Endothelial cell of umbilical vein (primary cell): ENCODE measurements at regions of chr3 and their contacts with region 1.

Region 1: GRCh38 chr3:119498186-119498987 is at the start of gene TIMMDC1:
- DNase-seq: peak; percentile 97
- H3K4me3 ChIP-seq: peak within 1 kb of the TSS; percentile 82 to 85 (median 83)
- H3K27ac ChIP-seq: peak within 1 kb of the TSS; percentile 80
- H3K4me1 ChIP-seq: peaks cover 26% of the 10 kb centered on the region
- H3K27me3 ChIP-seq: no peaks in the 10 kb centered on the region
- CTCF ChIP-seq: no peak
- POLR2A ChIP-seq: peak; percentile 86
- total RNA-seq, gene TIMMDC1: 76.2 and 80.8 TPM in 2 replicates

Region 2: GRCh38 chr3:119463171-119464169 is 34.9 kb before region 1 on chr3 and contains the start of gene TMEM39A:
- CTCF ChIA-PET with region 1: interaction called, 5 read pairs
- POLR2A ChIA-PET with region 1: interaction called, 11 read pairs
- dilution Hi-C with region 1: no loop called
- intact Hi-C with region 1: loop called (anchors 1 kb)
- DNase-seq: peak; percentile 98
- H3K4me3 ChIP-seq: peak within 1 kb of the TSS; percentile 92 to 98 (median 98)
- H3K27ac ChIP-seq: peak within 1 kb of the TSS; percentile 67
- H3K4me1 ChIP-seq: peaks cover 18% of the 10 kb centered on the region
- H3K27me3 ChIP-seq: no peaks in the 10 kb centered on the region
- CTCF ChIP-seq: no peak
- POLR2A ChIP-seq: peak; percentile 98
- total RNA-seq, gene TMEM39A: 53.0 and 56.0 TPM in 2 replicates

Region 3: DNA sequence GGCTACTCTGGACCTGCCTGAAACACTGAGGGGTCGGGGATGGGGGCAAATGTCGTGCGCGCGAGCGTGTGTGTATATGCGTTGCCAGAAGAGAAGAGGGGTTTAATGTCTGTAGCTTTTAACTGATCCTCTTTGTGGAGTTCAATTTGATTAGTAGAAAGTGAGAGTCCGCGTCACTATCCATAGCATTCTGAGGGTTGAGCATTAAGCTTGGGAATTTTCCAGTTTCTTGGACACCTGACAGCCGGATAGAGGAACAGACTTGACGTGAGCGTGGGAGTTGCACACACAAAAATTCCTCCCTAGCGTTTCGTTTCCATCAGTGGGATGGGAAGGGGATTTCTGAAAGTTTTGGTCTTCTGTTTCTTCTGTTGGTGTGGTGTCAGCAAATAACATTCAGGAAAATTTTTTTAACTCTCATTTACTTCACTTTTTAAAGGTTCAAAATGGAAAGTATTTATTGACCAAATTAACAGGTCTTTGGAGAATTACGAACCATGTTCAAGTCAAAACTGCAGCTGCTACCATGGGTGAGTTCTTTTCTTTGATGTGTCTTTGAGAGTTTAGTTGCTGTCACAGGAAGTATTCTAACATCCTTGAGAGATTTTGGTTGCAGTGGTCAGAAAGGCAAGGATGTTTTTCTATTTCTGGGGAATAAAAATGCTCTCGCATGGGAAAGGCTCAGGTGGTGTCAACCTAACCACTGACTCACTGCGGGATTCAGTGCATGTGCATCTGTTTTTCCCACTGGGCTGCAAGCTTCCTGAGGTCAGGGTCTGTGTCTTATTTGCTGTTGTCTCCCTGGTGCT is 28.8 kb before region 1 on chr3:
- CTCF ChIA-PET with region 1: interaction called, 5 read pairs
- POLR2A ChIA-PET with region 1: interaction called, 3 read pairs
- dilution Hi-C with region 1: no loop called
- intact Hi-C with region 1: loop called (anchors 1 kb)
- DNase-seq: peak; percentile 62
- H3K4me3 ChIP-seq: peak overlapping the region; percentile 78 to 86 (median 80)
- H3K27ac ChIP-seq: peak overlapping the region; percentile 19
- H3K4me1 ChIP-seq: peaks cover 13% of the 10 kb centered on the region
- H3K27me3 ChIP-seq: no peaks in the 10 kb centered on the region
- CTCF ChIP-seq: no peak
- POLR2A ChIP-seq: no peak